ENCODE measurements at regions of chr18 and their contacts with region 1.

Region 1: DNA sequence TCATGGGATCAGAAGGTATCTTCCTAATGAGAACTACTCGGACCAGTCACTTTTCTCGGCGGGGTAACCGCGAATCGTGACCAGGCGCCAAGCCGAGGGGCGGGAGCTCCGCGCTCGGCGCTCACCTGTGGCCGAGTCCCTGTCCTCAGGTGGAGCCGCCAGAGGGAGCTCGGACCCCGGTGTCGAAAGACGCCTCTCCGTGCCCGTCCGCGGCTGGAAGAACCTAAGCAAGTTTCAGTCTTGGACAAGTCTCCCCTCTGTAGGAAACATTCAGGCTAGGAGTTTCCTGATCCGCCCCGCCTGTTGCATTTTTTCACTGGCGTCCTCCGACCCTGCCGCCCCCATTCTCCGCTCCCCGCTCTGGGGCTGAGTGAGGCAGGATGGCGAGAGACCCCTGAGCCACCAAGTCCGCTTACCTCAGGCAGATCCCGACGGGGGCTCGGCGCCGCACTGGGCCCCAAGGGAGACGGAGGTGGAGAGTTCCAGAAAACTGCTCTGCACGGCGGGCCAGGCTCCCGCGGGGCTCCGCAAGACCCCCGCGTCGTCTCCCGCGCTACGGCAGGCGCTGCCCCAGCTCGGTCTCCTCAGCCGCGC is 478 bp downstream of the DSEL start:
- DNase-seq: peak; percentile 93
- ATAC-seq: peak; percentile 70
- H3K4me3 ChIP-seq: peak overlapping the region; percentile 99
- H3K27ac ChIP-seq: peak overlapping the region; percentile 42; the same call in 1 of the 2 replicates
- H3K4me1 ChIP-seq: peaks cover 26% of the 10 kb centered on the region
- H3K27me3 ChIP-seq: no peaks in the 10 kb centered on the region
- CTCF ChIP-seq: peak; percentile 83

Region 2: DNA sequence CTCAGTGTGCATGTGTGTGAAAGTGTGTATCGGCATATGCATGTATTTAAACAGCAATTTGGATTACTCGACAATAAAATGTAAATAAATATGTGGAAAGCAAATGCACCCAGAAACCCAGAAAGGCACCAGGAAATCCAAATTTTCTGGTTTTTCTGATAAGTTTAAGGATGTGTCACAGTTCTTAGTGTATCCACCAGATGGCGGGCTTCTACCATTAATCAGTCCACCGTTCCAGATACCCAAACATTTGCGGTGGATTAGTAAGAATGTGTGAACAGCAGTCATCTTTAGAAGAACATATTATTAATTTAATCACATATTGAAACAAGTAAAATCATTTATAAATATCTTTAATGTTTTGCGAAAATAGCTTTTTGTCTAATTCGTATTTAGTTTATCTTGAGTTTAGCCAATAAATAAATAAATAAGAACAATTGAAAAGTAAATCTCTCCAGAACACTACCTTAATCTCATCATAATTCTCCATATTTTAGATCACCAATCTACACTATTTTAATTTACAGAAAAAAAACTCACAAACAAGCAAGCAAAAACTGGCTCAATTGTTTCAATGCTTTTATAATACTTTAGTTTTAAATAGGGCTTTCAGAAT is 298.4 kb before region 1 on chr18:
- CTCF ChIA-PET with region 1: interaction called, 5 read pairs
- POLR2A ChIA-PET with region 1: no interaction called
- intact Hi-C with region 1: loop called (anchors 1 kb)
- DNase-seq: peak; percentile 73
- ATAC-seq: peak; percentile 83
- H3K4me3 ChIP-seq: no peak overlapping the region
- H3K27ac ChIP-seq: no peak overlapping the region
- H3K4me1 ChIP-seq: no peaks in the 10 kb centered on the region
- H3K27me3 ChIP-seq: no peaks in the 10 kb centered on the region
- CTCF ChIP-seq: peak; percentile 83

Region 3: DNA sequence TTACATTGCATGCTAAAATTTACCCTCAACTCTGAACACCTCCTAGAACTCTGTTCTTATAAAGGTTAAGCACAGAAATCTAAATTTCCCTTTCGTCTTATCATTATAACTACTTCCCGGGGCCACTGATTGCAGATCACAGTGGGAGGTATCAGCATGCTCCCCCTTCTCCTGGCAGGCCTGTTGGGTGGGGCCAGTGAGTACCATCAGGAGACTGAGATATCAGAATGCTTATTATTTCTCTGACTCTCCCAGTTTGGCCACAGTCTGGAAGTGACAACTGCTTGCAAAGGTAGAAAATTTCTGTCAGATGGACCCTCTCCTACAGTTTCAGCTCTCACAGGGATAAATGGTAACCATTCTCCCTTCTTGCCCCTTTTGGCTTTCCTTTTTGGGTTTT is 62.1 kb before region 1 on chr18:
- CTCF ChIA-PET with region 1: no interaction called
- POLR2A ChIA-PET with region 1: no interaction called
- intact Hi-C with region 1: no loop called
- DNase-seq: no peak
- ATAC-seq: no peak
- H3K4me3 ChIP-seq: no peak overlapping the region
- H3K27ac ChIP-seq: no peak overlapping the region
- H3K4me1 ChIP-seq: no peaks in the 10 kb centered on the region
- H3K27me3 ChIP-seq: no peaks in the 10 kb centered on the region
- CTCF ChIP-seq: no peak

Region 4: DNA sequence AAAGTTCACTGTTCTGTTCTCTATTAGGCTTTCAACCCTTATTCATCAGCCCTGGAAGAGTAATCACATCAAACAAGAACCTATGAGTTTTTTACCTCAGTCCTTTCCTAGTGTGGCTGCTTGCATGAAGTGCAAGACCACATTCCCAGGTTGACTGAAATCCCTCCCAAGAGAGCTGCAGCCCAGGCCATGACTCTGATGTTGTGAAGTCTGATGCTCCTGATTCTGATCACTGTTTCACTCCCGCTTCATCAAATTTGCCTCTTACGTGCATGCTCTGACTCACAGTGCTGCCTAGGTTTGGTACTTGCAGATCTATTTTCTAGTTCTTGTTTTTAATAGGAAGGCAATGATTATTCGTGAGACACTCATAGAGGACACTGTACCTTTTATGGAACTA is 58.7 kb after region 1 on chr18:
- CTCF ChIA-PET with region 1: no interaction called
- POLR2A ChIA-PET with region 1: no interaction called
- intact Hi-C with region 1: no loop called
- DNase-seq: no peak
- ATAC-seq: no peak
- H3K4me3 ChIP-seq: no peak overlapping the region
- H3K27ac ChIP-seq: no peak overlapping the region
- H3K4me1 ChIP-seq: no peaks in the 10 kb centered on the region
- H3K27me3 ChIP-seq: no peaks in the 10 kb centered on the region
- CTCF ChIP-seq: no peak

Region 5: GRCh38 chr18:67730884-67731283 is 214.8 kb after region 1 on chr18:
- CTCF ChIA-PET with region 1: no interaction called
- POLR2A ChIA-PET with region 1: interaction called, 4 read pairs
- intact Hi-C with region 1: loop called (anchors 2 kb)
- DNase-seq: peak; percentile 94
- ATAC-seq: peak; percentile 90
- H3K4me3 ChIP-seq: peak overlapping the region; percentile 27; the same call in 1 of the 2 replicates
- H3K27ac ChIP-seq: peak overlapping the region; percentile 94
- H3K4me1 ChIP-seq: peaks cover 47% of the 10 kb centered on the region
- H3K27me3 ChIP-seq: no peaks in the 10 kb centered on the region
- CTCF ChIP-seq: no peak

Region 6: DNA sequence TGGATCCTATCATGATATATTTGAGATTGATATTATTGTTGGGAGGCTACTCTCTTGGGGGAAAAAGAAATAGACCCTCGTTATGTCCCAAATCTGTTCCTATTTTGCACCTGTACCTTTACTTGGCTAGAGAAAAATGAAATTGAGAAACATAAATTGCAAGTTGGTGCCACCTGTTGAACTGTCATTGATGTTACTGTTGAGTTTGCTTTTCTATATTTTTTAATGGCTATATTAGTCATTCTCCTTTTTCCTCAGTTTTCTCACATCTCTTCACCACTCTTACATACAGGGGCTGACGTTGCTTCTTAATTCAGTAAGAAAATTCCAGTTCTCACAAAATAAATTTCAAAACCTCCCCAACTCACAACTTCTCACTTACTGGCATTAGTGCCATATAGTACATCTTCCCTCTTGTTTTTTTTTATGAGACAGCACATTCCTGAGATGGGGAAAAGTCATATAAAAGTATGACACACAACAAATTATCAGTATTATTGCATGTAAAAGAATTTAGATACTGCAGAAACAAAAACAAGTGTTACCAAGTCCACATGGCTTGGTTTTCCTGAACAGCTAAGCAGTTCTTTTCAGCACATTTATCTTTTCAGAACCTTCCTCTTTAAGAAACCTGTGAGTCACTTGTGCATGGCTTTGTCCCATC is 348.8 kb after region 1 on chr18:
- CTCF ChIA-PET with region 1: no interaction called
- POLR2A ChIA-PET with region 1: no interaction called
- intact Hi-C with region 1: loop called (anchors 1 kb)
- DNase-seq: peak; percentile 60
- ATAC-seq: peak; percentile 79
- H3K4me3 ChIP-seq: no peak overlapping the region
- H3K27ac ChIP-seq: peak overlapping the region; percentile 43
- H3K4me1 ChIP-seq: peaks cover 13% of the 10 kb centered on the region
- H3K27me3 ChIP-seq: no peaks in the 10 kb centered on the region
- CTCF ChIP-seq: peak; percentile 57

Region 7: GRCh38 chr18:68177807-68178702 is 662.0 kb after region 1 on chr18:
- CTCF ChIA-PET with region 1: no interaction called
- POLR2A ChIA-PET with region 1: interaction called, 9 read pairs
- intact Hi-C with region 1: loop called (anchors 5 kb)
- DNase-seq: peak; percentile 98
- ATAC-seq: peak; percentile 88
- H3K4me3 ChIP-seq: no peak overlapping the region
- H3K27ac ChIP-seq: peak overlapping the region; percentile 54
- H3K4me1 ChIP-seq: peaks cover 36% of the 10 kb centered on the region
- H3K27me3 ChIP-seq: no peaks in the 10 kb centered on the region
- CTCF ChIP-seq: no peak

Region 8: DNA sequence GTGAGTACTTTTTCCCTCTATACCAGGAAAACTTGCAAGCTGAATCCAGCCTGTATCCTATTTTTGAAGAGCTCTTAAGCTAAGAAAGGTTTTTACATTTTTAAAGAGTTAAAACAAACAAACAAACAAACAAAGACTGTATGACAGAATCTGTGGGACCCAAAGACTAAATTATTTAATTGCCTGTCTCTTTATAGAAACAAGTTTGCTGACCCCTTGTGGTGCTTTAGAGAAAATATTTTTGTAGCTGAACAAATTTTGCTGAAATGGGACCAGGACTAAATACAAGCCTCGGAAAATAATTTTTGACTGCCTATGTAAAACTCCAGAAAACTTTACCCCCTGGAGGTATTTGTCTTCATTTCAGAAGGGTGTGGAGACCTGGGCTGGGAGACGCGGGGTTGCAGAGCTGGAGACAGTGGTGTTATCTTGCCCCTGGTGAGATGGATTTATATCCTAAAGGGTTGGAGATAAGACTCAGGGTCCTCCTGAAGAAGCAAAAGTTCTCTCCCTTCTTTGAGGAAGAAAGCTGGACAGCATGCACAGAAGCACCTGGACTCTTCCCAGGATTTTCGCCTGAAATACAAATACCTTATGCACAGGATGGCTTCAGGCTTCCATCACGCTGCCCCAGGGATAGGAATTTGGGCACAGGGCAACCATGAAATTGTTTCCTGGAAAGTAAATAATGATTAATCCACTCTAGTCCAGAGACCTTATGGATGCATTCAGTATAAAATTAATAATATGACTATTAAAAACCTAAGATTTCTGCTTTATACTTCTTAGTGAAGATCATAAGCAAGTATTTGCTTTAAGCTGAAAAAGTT is 1144.5 kb after region 1 on chr18:
- CTCF ChIA-PET with region 1: interaction called, 5 read pairs
- POLR2A ChIA-PET with region 1: interaction called, 3 read pairs
- intact Hi-C with region 1: loop called (anchors 1 kb)
- DNase-seq: peak; percentile 69
- ATAC-seq: peak; percentile 78
- H3K4me3 ChIP-seq: peak overlapping the region; percentile 45; the same call in 1 of the 2 replicates
- H3K27ac ChIP-seq: no peak overlapping the region
- H3K4me1 ChIP-seq: peaks cover 8% of the 10 kb centered on the region; the same call in 1 of the 2 replicates
- H3K27me3 ChIP-seq: no peaks in the 10 kb centered on the region
- CTCF ChIP-seq: peak; percentile 79